Thyroid gland (tissue), 4 donors: ENCODE measurements at regions of chr7 and their contacts with region 1.

Region 1: GRCh38 chr7:92621026-92621540 is 30.9 kb upstream of the FAM133B start:
- DNase-seq: peak; percentile 46 to 55
- H3K4me3 ChIP-seq: no peak overlapping the region
- H3K27ac ChIP-seq: no peak overlapping the region
- H3K4me1 ChIP-seq: no peaks in the 10 kb centered on the region
- H3K27me3 ChIP-seq: no peaks in the 10 kb centered on the region
- CTCF ChIP-seq: peak; percentile 29 to 87 (median 72)
- POLR2A ChIP-seq: no peak

Region 2: GRCh38 chr7:92833024-92833765 is 212.1 kb after region 1 on chr7:
- intact Hi-C with region 1: loop called (anchors 5 kb)
- DNase-seq: peak; percentile 89 to 93
- H3K4me3 ChIP-seq: peak overlapping the region; percentile 62 to 98 (median 91)
- H3K27ac ChIP-seq: peak overlapping the region; percentile 75 to 94 (median 85)
- H3K4me1 ChIP-seq: peaks cover 6 to 13% of the 10 kb centered on the region in 2 donors
- H3K27me3 ChIP-seq: no peaks in the 10 kb centered on the region
- CTCF ChIP-seq: peak; percentile 67 to 91 (median 78)
- POLR2A ChIP-seq: peak in 1 of 2 donors; percentile 49

Region 3: GRCh38 chr7:92988051-92988450 is 367.0 kb after region 1 on chr7:
- intact Hi-C with region 1: loop called (anchors 10 kb)
- DNase-seq: no peak
- H3K4me3 ChIP-seq: no peak overlapping the region
- H3K27ac ChIP-seq: no peak overlapping the region
- H3K4me1 ChIP-seq: no peaks in the 10 kb centered on the region
- H3K27me3 ChIP-seq: no peaks in the 10 kb centered on the region
- CTCF ChIP-seq: peak in 4 of 6 experiments; percentile 22 to 54 (median 42)
- POLR2A ChIP-seq: no peak